H1 (cell line): ENCODE measurements at regions of chr2 and their contacts with region 1.

Region 1: DNA sequence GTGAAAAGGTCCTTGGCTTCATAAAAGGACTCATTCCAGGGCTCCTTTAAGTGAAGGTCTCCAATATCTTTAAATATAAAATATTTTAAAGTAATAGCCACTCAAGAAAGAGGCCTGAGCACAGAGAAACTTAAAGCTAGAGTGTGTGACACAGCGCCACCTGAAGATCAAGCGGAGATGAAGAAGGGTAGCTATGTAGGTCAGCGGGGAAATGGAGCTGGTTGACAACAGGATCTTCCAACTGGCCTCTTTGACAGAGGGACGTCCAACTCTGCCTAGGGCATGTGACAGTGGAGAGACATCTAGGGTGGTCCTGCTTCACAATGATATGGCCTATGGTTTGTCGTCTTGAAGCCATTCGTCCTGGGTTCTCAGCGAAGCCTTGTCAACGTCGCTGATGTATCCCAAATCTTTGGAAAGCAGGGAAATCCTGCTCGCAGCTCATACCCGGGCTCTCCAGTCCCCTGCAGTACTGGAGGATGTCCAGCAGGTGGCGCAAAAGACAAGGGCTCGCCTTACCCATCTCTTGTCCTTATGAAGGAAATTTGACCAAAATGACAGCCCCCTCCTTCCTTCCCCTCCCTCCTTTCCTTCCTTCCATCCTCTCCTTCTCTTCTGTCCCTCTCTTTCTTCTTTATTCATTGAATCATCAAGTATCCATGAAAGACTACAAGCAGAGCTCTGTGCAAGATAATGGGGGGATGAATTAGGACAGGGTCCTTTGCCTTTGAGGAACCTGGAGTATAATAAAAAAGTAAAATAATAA is 59.6 kb downstream of the LONRF2 start:
- DNase-seq: peak in 1 of 2 experiments; percentile 89
- H3K4me3 ChIP-seq: peak overlapping the region in 3 of 4 experiments; percentile 4 to 45 (median 15); a peak in 3 of 8 replicates
- H3K27ac ChIP-seq: no peak overlapping the region
- H3K4me1 ChIP-seq: no peaks in the 10 kb centered on the region; a peak in 1 of 7 replicates
- H3K27me3 ChIP-seq: no peaks in the 10 kb centered on the region
- CTCF ChIP-seq: peak; percentile 86 to 91 (median 89)
- EP300 ChIP-seq: no peak
- POLR2A ChIP-seq: no peak
- RAD21 ChIP-seq: peak; percentile 89 to 91

Region 2: GRCh38 chr2:99725820-99726219 is 536.9 kb before region 1 on chr2:
- CTCF ChIA-PET with region 1: interaction called, 33 read pairs
- POLR2A ChIA-PET with region 1: no interaction called
- DNase-seq: no peak
- H3K4me3 ChIP-seq: no peak overlapping the region
- H3K27ac ChIP-seq: no peak overlapping the region
- H3K4me1 ChIP-seq: no peaks in the 10 kb centered on the region
- H3K27me3 ChIP-seq: no peaks in the 10 kb centered on the region
- CTCF ChIP-seq: peak in 1 of 3 experiments; percentile 17; a peak in 1 of 4 replicates
- EP300 ChIP-seq: no peak
- POLR2A ChIP-seq: no peak
- RAD21 ChIP-seq: peak in 1 of 2 experiments; percentile 41

Region 3: DNA sequence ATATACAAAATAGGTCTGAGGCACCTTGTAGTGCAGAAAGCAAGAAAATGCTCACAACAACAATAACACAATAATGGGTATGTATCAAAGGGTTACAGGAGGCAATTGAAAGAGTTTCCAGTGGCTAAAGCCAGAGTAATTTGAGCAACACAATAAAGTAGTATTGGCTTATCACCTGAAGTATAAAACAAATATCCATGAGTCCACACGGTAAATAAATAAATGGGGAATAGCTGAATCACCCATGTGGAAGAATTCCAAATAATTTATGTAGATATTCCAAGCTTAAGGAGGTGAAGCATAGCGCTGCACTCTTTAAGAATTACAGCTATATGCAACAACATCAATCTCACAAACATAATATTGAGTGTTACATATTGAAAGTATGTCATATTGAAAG is 231.1 kb before region 1 on chr2:
- CTCF ChIA-PET with region 1: no interaction called
- POLR2A ChIA-PET with region 1: no interaction called
- DNase-seq: no peak
- H3K4me3 ChIP-seq: no peak overlapping the region
- H3K27ac ChIP-seq: no peak overlapping the region
- H3K4me1 ChIP-seq: no peaks in the 10 kb centered on the region
- H3K27me3 ChIP-seq: no peaks in the 10 kb centered on the region; a peak in 1 of 7 replicates
- CTCF ChIP-seq: no peak
- EP300 ChIP-seq: no peak
- POLR2A ChIP-seq: no peak
- RAD21 ChIP-seq: no peak

Region 4: DNA sequence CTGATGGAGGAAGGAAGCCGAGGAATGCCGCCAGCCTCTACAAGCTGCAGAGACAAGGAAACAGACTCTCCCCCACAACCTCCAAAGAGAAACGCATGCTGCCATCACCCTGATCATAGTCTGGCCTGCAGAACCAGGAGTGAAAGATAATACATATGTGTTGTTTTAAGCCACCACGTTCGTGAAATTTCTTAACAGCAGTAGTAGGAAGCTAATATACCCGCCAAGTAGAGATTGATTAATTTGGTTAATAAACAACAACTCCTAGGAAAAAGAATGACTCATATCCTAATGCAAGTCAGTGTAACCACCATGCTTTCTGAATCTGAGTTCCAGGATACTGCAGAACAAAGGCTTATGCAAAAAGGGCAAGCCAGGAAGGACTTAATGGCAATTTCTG is 23.0 kb after region 1 on chr2:
- CTCF ChIA-PET with region 1: interaction called, 41 read pairs
- POLR2A ChIA-PET with region 1: interaction called, 3 read pairs
- DNase-seq: no peak
- H3K4me3 ChIP-seq: no peak overlapping the region
- H3K27ac ChIP-seq: no peak overlapping the region
- H3K4me1 ChIP-seq: peaks cover 0 to 21% (median 8%) of the 10 kb centered on the region in 4 experiments; a peak in 5 of 7 replicates
- H3K27me3 ChIP-seq: no peaks in the 10 kb centered on the region
- CTCF ChIP-seq: no peak
- EP300 ChIP-seq: no peak
- POLR2A ChIP-seq: no peak
- RAD21 ChIP-seq: no peak

Region 5: GRCh38 chr2:100365434-100365833 is 102.7 kb after region 1 on chr2:
- CTCF ChIA-PET with region 1: interaction called, 46 read pairs
- POLR2A ChIA-PET with region 1: no interaction called
- DNase-seq: no peak
- H3K4me3 ChIP-seq: no peak overlapping the region
- H3K27ac ChIP-seq: no peak overlapping the region
- H3K4me1 ChIP-seq: peaks cover 0 to 8% (median 4%) of the 10 kb centered on the region in 4 experiments; a peak in 3 of 7 replicates
- H3K27me3 ChIP-seq: no peaks in the 10 kb centered on the region
- CTCF ChIP-seq: no peak
- EP300 ChIP-seq: no peak
- POLR2A ChIP-seq: no peak
- RAD21 ChIP-seq: no peak

Region 6: GRCh38 chr2:100407108-100407507 is 144.4 kb after region 1 on chr2:
- CTCF ChIA-PET with region 1: interaction called, 38 read pairs
- POLR2A ChIA-PET with region 1: no interaction called
- DNase-seq: no peak
- H3K4me3 ChIP-seq: no peak overlapping the region
- H3K27ac ChIP-seq: no peak overlapping the region
- H3K4me1 ChIP-seq: peaks cover 14 to 30% (median 20%) of the 10 kb centered on the region in 4 experiments
- H3K27me3 ChIP-seq: no peaks in the 10 kb centered on the region
- CTCF ChIP-seq: no peak
- EP300 ChIP-seq: no peak
- POLR2A ChIP-seq: no peak
- RAD21 ChIP-seq: no peak